ENCODE measurements at regions of chr5 and their contacts with region 1.

Region 1: DNA sequence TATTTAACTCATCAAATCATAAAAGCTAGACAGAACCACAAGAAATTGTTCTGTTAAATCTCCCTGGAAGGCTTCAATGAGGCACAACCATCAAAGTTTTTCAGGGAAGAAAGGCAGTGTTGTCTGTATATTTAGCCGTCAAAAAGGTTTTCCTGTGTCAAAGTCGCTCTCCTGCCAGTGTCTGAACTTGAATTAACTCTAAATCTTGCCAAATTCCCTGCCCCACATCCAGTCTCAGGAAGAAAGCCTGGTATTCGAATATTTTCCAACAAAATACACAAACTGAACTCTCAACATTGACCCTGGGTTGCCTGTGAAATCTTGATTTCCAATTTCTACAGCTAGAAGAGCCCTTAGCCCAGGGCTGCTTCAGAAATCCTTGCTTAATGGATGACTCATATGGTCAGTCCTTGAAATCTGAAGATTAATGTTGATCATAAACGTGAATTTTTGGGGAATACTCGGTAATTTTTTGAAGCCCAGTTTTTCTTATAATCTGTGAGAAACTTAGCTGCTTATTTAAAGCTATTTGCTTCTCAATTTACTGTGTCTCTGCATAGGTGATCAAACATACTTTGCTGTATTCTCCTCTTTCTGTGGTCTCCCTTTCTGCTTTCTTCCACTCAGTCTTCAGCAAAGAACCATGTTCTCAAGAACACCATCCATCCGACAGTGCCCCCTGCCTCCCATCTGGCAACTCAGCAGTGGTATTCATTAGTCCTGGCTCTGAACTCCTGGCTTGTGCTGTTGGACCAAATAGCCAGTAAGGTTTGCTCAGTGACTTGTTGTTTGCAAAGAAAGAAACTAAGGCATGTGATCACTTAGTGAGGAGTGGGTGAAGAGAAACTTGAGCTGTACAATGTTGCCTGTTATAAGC is 58.9 kb downstream of the NREP start:
- DNase-seq: no peak
- H3K4me3 ChIP-seq: no peak overlapping the region
- H3K27ac ChIP-seq: no peak overlapping the region
- H3K4me1 ChIP-seq: peaks cover 0 to 3% (median 0%) of the 10 kb centered on the region in 4 experiments; a peak in 2 of 7 replicates
- H3K27me3 ChIP-seq: no peaks in the 10 kb centered on the region
- CTCF ChIP-seq: peak; percentile 57 to 68 (median 60)
- EP300 ChIP-seq: no peak
- POLR2A ChIP-seq: no peak
- RAD21 ChIP-seq: peak; percentile 66 to 76

Region 2: GRCh38 chr5:111550279-111551020 is 147.7 kb before region 1 on chr5:
- CTCF ChIA-PET with region 1: interaction called, 23 read pairs
- POLR2A ChIA-PET with region 1: no interaction called
- DNase-seq: peak; percentile 63 to 83
- H3K4me3 ChIP-seq: no peak overlapping the region
- H3K27ac ChIP-seq: no peak overlapping the region
- H3K4me1 ChIP-seq: peaks cover 1 to 15% (median 11%) of the 10 kb centered on the region in 4 experiments; a peak in 6 of 7 replicates
- H3K27me3 ChIP-seq: no peaks in the 10 kb centered on the region
- CTCF ChIP-seq: peak; percentile 35 to 69 (median 63)
- EP300 ChIP-seq: no peak
- POLR2A ChIP-seq: no peak
- RAD21 ChIP-seq: peak; percentile 87 to 91

Region 3: GRCh38 chr5:111685971-111686370 is 12.1 kb before region 1 on chr5:
- CTCF ChIA-PET with region 1: interaction called, 17 read pairs
- POLR2A ChIA-PET with region 1: no interaction called
- DNase-seq: peak in 1 of 2 experiments; percentile 15
- H3K4me3 ChIP-seq: no peak overlapping the region
- H3K27ac ChIP-seq: no peak overlapping the region
- H3K4me1 ChIP-seq: peaks cover 0 to 2% (median 0%) of the 10 kb centered on the region in 4 experiments; a peak in 1 of 7 replicates
- H3K27me3 ChIP-seq: no peaks in the 10 kb centered on the region
- CTCF ChIP-seq: peak in 2 of 3 experiments; percentile 54 to 65; a peak in 3 of 4 replicates
- EP300 ChIP-seq: no peak
- POLR2A ChIP-seq: no peak
- RAD21 ChIP-seq: peak; percentile 83 to 89